ENCODE measurements at regions of chr4 and their contacts with region 1.

Region 1: GRCh38 chr4:5050520-5051277 is 581 bp upstream of the STK32B start:
- DNase-seq: peak; percentile 87
- H3K4me3 ChIP-seq: peak overlapping the region; percentile 32 to 60 (median 52)
- H3K27ac ChIP-seq: peak overlapping the region; percentile 10 to 60 (median 36)
- H3K4me1 ChIP-seq: peaks cover 0 to 22% (median 18%) of the 10 kb centered on the region in 4 donors
- H3K27me3 ChIP-seq: no peaks in the 10 kb centered on the region
- CTCF ChIP-seq: peak; percentile 19 to 66 (median 44)
- EP300 ChIP-seq: no peak
- POLR2A ChIP-seq: no peak

Region 2: DNA sequence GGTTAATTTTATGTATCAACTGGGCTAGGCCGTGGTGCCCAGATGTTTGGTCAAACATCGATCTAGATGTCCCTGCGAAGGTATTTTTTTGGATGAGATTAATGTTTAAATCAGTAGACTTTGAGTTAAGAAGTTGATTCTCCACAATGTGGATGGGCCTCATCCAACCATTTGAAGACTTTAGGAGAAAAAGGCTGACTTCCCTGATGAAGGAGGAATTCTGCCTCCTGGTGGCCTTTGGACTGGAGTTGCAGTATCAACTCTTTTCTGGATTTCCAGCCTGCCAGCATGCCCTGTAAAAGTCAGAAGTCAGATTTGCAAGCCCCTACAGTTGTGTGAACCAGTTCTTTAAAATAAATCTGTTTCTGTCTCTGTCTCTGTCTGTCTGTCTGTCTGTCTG is 92.0 kb after region 1 on chr4:
- intact Hi-C with region 1: loop called (anchors 2 kb)
- DNase-seq: no peak
- H3K4me3 ChIP-seq: no peak overlapping the region
- H3K27ac ChIP-seq: no peak overlapping the region
- H3K4me1 ChIP-seq: no peaks in the 10 kb centered on the region
- H3K27me3 ChIP-seq: no peaks in the 10 kb centered on the region
- CTCF ChIP-seq: peak in 1 of 4 experiments; percentile 26
- EP300 ChIP-seq: no peak
- POLR2A ChIP-seq: no peak

Region 3: GRCh38 chr4:5812506-5813229 is 762.0 kb after region 1 on chr4:
- intact Hi-C with region 1: loop called (anchors 10 kb)
- DNase-seq: peak; percentile 64
- H3K4me3 ChIP-seq: no peak overlapping the region
- H3K27ac ChIP-seq: peak overlapping the region in 3 of 4 donors; percentile 43 to 67 (median 59)
- H3K4me1 ChIP-seq: peaks cover 0 to 8% (median 0%) of the 10 kb centered on the region in 4 donors
- H3K27me3 ChIP-seq: no peaks in the 10 kb centered on the region
- CTCF ChIP-seq: peak; percentile 29 to 69 (median 60)
- EP300 ChIP-seq: no peak
- POLR2A ChIP-seq: no peak